ENCODE measurements at regions of chr2 and their contacts with region 1.

Region 1: GRCh38 chr2:28594289-28595108 is 98.6 kb downstream of the PLB1 start:
- DNase-seq: peak; percentile 78 to 85 (median 80)
- H3K4me3 ChIP-seq: peak overlapping the region in 1 of 2 donors; percentile 9
- H3K4me3 Mint-ChIP-seq: peak overlapping the region; percentile 63 to 77 (median 70)
- H3K27ac ChIP-seq: peak overlapping the region; percentile 70
- H3K27ac Mint-ChIP-seq: peak overlapping the region; percentile 92 to 98 (median 97)
- H3K4me1 ChIP-seq: peaks cover 18% of the 10 kb centered on the region
- H3K4me1 Mint-ChIP-seq: peaks cover 13 to 23% (median 16%) of the 10 kb centered on the region in 4 donors
- H3K27me3 ChIP-seq: no peaks in the 10 kb centered on the region
- H3K27me3 Mint-ChIP-seq: no peaks in the 10 kb centered on the region

Region 2: GRCh38 chr2:28610583-28611201 is 16.2 kb after region 1 on chr2:
- CTCF ChIA-PET with region 1: interaction called, 119 read pairs
- POLR2A ChIA-PET with region 1: interaction called, 36 read pairs
- intact Hi-C with region 1: loop called (anchors 2 kb)
- DNase-seq: no peak
- H3K4me3 ChIP-seq: no peak overlapping the region
- H3K4me3 Mint-ChIP-seq: peak overlapping the region in 1 of 8 donors; percentile 8
- H3K27ac ChIP-seq: no peak overlapping the region
- H3K27ac Mint-ChIP-seq: peak overlapping the region in 6 of 7 donors; percentile 34 to 73 (median 48)
- H3K4me1 ChIP-seq: peaks cover 37% of the 10 kb centered on the region
- H3K4me1 Mint-ChIP-seq: peaks cover 5 to 32% (median 21%) of the 10 kb centered on the region in 4 donors
- H3K27me3 ChIP-seq: no peaks in the 10 kb centered on the region
- H3K27me3 Mint-ChIP-seq: no peaks in the 10 kb centered on the region

Region 3: GRCh38 chr2:28681158-28681571 is 86.7 kb after region 1 on chr2:
- CTCF ChIA-PET with region 1: interaction called, 28 read pairs
- POLR2A ChIA-PET with region 1: interaction called, 9 read pairs
- intact Hi-C with region 1: loop called (anchors 10 kb)
- DNase-seq: peak; percentile 46 to 82 (median 50)
- H3K4me3 ChIP-seq: peak overlapping the region in 1 of 2 donors; percentile 24
- H3K4me3 Mint-ChIP-seq: peak overlapping the region in 7 of 8 donors; percentile 26 to 57 (median 47)
- H3K27ac ChIP-seq: peak overlapping the region; percentile 36
- H3K27ac Mint-ChIP-seq: peak overlapping the region; percentile 79 to 95 (median 86)
- H3K4me1 ChIP-seq: peaks cover 29% of the 10 kb centered on the region
- H3K4me1 Mint-ChIP-seq: peaks cover 23 to 37% (median 34%) of the 10 kb centered on the region in 4 donors
- H3K27me3 ChIP-seq: no peaks in the 10 kb centered on the region
- H3K27me3 Mint-ChIP-seq: no peaks in the 10 kb centered on the region

Region 4: DNA sequence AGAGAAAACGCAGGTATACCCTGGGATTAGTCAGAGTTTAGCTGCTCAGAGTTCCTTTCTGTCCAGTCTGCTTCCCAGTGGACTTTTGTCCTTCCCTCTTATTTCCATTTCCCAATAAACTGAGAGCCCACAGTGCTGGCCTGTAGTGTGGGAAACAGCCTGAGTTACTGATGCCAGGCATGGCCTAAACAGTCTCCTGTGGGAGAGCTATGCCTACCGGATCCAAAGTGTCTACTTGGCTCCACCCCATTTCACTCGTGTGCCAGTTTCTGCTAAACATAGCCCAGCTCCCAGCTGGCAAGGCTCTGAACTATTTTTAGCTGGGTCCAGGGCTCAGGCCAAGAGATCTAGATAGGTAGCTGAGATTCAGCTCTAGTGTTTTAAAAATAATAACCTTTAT is 141.5 kb after region 1 on chr2:
- CTCF ChIA-PET with region 1: interaction called, 11 read pairs
- POLR2A ChIA-PET with region 1: no interaction called
- intact Hi-C with region 1: no loop called
- DNase-seq: no peak
- H3K4me3 ChIP-seq: no peak overlapping the region
- H3K4me3 Mint-ChIP-seq: no peak overlapping the region
- H3K27ac ChIP-seq: no peak overlapping the region
- H3K27ac Mint-ChIP-seq: no peak overlapping the region
- H3K4me1 ChIP-seq: no peaks in the 10 kb centered on the region
- H3K4me1 Mint-ChIP-seq: no peaks in the 10 kb centered on the region
- H3K27me3 ChIP-seq: no peaks in the 10 kb centered on the region
- H3K27me3 Mint-ChIP-seq: peaks cover 0 to 2% of the 10 kb centered on the region in 2 donors

Region 5: DNA sequence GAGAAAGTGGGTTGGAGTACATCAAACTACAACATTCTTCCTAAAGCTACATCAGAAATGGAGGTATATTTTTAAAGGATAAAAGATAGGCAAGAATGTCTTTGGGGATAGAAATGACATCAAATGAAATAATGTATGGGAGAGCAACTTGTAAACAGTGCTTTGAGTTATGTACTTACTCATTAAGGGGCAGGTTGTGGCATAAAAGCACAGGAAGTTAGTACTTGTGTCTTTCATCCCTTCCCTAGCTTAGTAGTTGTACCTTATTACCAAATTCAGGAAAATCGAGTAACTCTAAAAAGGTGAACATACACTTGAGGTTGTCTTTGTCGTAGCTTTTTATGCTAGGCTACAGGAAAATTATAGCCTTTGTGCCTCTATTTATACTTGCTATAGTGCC is 186.0 kb after region 1 on chr2:
- CTCF ChIA-PET with region 1: interaction called, 26 read pairs
- POLR2A ChIA-PET with region 1: no interaction called
- intact Hi-C with region 1: no loop called
- DNase-seq: no peak
- H3K4me3 ChIP-seq: no peak overlapping the region
- H3K4me3 Mint-ChIP-seq: no peak overlapping the region
- H3K27ac ChIP-seq: no peak overlapping the region
- H3K27ac Mint-ChIP-seq: peak overlapping the region in 2 of 7 donors; percentile 11 to 46
- H3K4me1 ChIP-seq: peaks cover 7% of the 10 kb centered on the region
- H3K4me1 Mint-ChIP-seq: peaks cover 10 to 19% (median 15%) of the 10 kb centered on the region in 4 donors
- H3K27me3 ChIP-seq: no peaks in the 10 kb centered on the region
- H3K27me3 Mint-ChIP-seq: no peaks in the 10 kb centered on the region

Region 6: DNA sequence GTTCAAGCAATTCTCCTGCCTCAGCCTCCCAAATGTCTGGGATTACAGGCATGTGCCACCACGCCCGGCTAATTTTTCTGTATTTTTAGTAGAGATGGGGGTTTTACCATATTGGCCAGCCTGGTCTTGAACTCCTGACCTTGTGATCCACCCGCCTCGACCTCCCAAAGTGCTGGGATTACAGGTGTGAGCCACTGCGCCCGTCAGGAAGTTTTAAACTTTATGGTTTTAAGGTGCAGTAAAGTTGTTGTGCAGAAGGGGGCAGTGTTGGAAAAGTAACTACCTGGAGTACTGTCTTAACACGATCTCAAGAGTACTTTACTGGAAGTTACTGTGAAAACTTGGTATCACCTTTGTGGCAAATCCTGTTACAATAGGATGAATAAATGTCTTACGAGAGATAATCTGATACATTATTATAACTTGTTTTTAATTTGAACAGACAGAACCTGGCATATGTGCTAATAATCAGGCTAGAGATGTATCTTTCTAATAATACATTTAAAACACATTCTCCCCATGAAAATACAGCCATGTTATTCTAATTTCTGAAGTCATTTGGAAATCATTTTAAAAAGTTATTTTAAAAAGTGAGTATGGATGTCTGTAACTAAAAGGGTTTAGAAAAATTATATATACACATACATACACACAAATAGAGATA is 226.9 kb after region 1 on chr2:
- CTCF ChIA-PET with region 1: interaction called, 13 read pairs
- POLR2A ChIA-PET with region 1: no interaction called
- intact Hi-C with region 1: no loop called
- DNase-seq: peak; percentile 57 to 65 (median 64)
- H3K4me3 ChIP-seq: no peak overlapping the region
- H3K4me3 Mint-ChIP-seq: no peak overlapping the region
- H3K27ac ChIP-seq: no peak overlapping the region
- H3K27ac Mint-ChIP-seq: peak overlapping the region in 2 of 7 donors; percentile 0 to 38
- H3K4me1 ChIP-seq: no peaks in the 10 kb centered on the region
- H3K4me1 Mint-ChIP-seq: peaks cover 0 to 5% (median 3%) of the 10 kb centered on the region in 4 donors
- H3K27me3 ChIP-seq: no peaks in the 10 kb centered on the region
- H3K27me3 Mint-ChIP-seq: peaks cover 0 to 4% of the 10 kb centered on the region in 2 donors